HCT116 (cell line): ENCODE measurements at regions of chr5 and their contacts with region 1.

Region 1: GRCh38 chr5:56350598-56351170 is 117.6 kb upstream of the ANKRD55 start:
- DNase-seq: peak; percentile 80
- ATAC-seq: peak; percentile 92
- H3K4me3 ChIP-seq: no peak overlapping the region; a peak in 1 of 4 replicates
- H3K27ac ChIP-seq: peak overlapping the region; percentile 6; the same call in 1 of the 2 replicates
- H3K4me1 ChIP-seq: peaks cover 36 to 43% of the 10 kb centered on the region in 2 experiments
- H3K27me3 ChIP-seq: peaks cover 5% of the 10 kb centered on the region; the same call in 1 of the 2 replicates
- CTCF ChIP-seq: no peak
- POLR2A ChIP-seq: no peak
- RAD21 ChIP-seq: 0 out of 2 replicates have a peak, but pooled peaks have one; percentile 19

Region 2: DNA sequence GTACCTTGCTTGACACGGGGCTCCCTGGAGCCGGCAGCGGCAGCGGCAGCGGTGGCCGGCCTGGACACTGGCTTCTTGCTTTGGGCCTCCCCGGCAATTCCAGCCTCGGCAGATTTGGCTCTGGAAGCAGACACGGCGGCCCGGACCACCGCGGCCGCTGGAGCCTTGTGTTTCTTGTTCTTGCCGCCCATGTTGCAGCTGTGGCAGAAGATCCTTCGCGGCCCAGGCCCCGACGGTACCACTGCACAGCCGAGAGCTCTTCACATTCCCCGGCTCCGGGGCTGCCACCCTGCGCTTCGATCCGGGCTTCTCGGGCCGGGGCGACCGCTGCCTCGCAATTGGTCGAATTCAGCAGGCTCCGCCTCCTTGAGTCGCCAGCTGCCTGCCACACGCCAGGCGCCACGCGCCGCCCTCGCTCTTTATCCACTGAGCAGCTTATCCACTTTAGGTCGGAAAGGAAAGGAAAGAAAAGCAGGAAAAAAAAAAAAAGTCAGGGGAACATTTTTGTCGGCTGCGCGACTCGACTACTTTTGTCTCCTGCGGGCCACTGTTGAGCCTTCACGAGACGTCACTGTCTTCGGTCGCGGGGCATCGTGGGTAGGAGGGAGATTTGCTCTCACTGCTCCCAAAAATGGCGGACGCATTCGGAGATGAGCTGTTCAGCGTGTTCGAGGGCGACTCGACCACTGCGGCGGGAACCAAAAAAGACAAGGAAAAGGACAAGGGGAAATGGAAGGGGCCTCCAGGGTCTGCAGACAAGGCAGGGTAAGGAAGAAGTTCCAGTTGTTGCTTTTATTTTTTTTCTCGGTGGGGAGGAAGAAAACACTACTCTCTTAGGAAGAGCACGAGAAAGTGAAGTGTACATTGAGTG is 1043.1 kb before region 1 on chr5 and contains the starts of genes DHX29 and MTREX:
- CTCF ChIA-PET with region 1: no interaction called
- POLR2A ChIA-PET with region 1: no interaction called
- RAD21 ChIA-PET with region 1: no interaction called
- intact Hi-C with region 1: loop called (anchors 10 kb)
- DNase-seq: peak; percentile 80
- ATAC-seq: peak; percentile 93
- H3K4me3 ChIP-seq: peak within 1 kb of the TSS; percentile 89 to 96
- H3K27ac ChIP-seq: peak within 1 kb of the TSS; percentile 93
- H3K4me1 ChIP-seq: peaks cover 18 to 19% of the 10 kb centered on the region in 2 experiments
- H3K27me3 ChIP-seq: no peaks in the 10 kb centered on the region
- CTCF ChIP-seq: no peak
- POLR2A ChIP-seq: peak; percentile 53
- RAD21 ChIP-seq: no peak
- total RNA-seq, gene DHX29: 24.3 TPM
- total RNA-seq, gene MTREX: 101 TPM

Region 3: DNA sequence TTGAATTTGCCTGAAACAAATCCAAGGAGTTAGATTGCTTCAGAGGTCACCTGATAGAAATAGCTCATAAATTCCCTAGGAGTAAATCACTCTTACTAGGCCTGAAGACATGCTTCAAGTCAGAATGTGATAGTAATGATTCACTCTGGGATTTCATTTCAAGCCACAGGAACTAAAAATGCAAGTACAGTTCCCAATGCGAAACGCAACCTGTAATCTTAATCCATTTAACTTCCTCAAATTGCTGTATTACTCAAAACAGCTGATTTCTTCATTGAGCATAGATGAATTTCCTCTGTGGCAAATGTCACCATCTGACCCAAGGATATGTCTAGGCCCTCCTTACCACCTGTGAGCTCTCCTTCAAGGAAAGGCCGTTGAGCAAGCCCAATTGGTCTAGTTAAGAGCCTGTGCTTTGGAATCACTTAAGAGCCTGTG is 323.8 kb before region 1 on chr5:
- CTCF ChIA-PET with region 1: no interaction called
- POLR2A ChIA-PET with region 1: no interaction called
- RAD21 ChIA-PET with region 1: no interaction called
- intact Hi-C with region 1: no loop called
- DNase-seq: no peak
- ATAC-seq: no peak
- H3K4me3 ChIP-seq: no peak overlapping the region
- H3K27ac ChIP-seq: no peak overlapping the region
- H3K4me1 ChIP-seq: no peaks in the 10 kb centered on the region
- H3K27me3 ChIP-seq: no peaks in the 10 kb centered on the region
- CTCF ChIP-seq: no peak
- POLR2A ChIP-seq: no peak
- RAD21 ChIP-seq: no peak

Region 4: GRCh38 chr5:56360816-56361215 is 10.1 kb after region 1 on chr5:
- CTCF ChIA-PET with region 1: no interaction called
- POLR2A ChIA-PET with region 1: no interaction called
- RAD21 ChIA-PET with region 1: no interaction called
- intact Hi-C with region 1: no loop called
- DNase-seq: no peak
- ATAC-seq: no peak
- H3K4me3 ChIP-seq: no peak overlapping the region
- H3K27ac ChIP-seq: no peak overlapping the region
- H3K4me1 ChIP-seq: peaks cover 24 to 39% of the 10 kb centered on the region in 2 experiments
- H3K27me3 ChIP-seq: no peaks in the 10 kb centered on the region
- CTCF ChIP-seq: no peak
- POLR2A ChIP-seq: no peak
- RAD21 ChIP-seq: no peak

Region 5: DNA sequence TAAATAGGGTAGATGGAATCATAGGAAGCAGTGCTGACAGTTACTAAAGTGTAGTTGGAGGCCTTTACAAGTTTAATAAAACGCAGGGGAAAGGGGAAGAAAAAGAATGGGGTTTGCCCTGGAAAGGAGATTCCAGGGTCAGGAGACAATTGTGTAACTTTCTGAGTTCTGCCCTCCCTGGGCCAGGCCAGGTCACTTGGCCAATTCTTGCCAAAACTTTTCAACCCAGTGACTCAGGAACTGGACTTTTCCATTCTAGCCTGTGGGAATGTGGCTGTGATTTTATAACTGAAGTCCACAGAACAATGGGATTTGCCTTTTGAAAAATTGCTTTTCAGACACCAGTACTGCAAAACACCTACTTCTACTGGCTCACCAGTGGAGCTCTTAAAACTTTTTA is 172.3 kb after region 1 on chr5:
- CTCF ChIA-PET with region 1: no interaction called
- POLR2A ChIA-PET with region 1: no interaction called
- RAD21 ChIA-PET with region 1: no interaction called
- intact Hi-C with region 1: no loop called
- DNase-seq: no peak
- ATAC-seq: no peak
- H3K4me3 ChIP-seq: no peak overlapping the region
- H3K27ac ChIP-seq: no peak overlapping the region
- H3K4me1 ChIP-seq: peaks cover 11 to 16% of the 10 kb centered on the region in 2 experiments; a peak in 3 of 4 replicates
- H3K27me3 ChIP-seq: no peaks in the 10 kb centered on the region
- CTCF ChIP-seq: no peak
- POLR2A ChIP-seq: no peak
- RAD21 ChIP-seq: no peak

Region 6: DNA sequence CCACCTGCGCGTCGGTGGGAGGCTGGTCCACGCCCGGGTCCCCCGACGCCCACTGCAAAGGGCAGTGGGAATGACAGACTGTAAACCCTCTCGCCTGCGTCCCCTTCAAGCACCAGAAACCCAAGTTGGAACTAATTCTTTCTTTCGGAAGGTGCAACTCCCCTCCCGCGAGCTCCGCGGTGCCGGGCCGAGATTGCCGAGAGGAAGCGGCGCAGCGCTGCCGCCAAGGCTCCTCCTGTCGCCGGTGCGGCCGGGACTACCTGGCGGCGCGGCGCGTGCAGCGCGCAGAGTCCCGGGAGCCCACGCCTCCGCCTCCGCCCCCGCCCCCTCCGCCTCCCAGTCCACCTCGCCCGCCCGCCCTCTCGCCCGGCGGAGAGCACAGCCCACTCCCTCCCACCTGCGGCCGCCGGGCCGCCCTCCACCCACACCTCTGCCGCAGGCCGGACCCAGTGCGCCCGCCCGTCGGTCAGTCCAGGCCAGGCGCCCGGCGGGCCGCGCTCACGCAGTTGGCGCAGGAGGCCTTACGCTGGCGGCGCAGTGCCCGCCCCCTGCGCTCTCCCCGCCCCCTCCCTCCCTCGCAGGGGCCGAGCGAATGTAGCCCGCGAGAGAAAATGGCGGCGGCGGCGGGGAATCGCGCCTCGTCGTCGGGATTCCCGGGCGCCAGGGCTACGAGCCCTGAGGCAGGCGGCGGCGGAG is 464.4 kb after region 1 on chr5 and contains the start of gene MAP3K1:
- CTCF ChIA-PET with region 1: no interaction called
- POLR2A ChIA-PET with region 1: no interaction called
- RAD21 ChIA-PET with region 1: no interaction called
- intact Hi-C with region 1: loop called (anchors 5 kb)
- DNase-seq: no peak
- ATAC-seq: peak; percentile 85
- H3K4me3 ChIP-seq: peak within 1 kb of the TSS; percentile 61 to 79
- H3K27ac ChIP-seq: peak within 1 kb of the TSS; percentile 90
- H3K4me1 ChIP-seq: peaks cover 10 to 24% of the 10 kb centered on the region in 2 experiments; a peak in 3 of 4 replicates
- H3K27me3 ChIP-seq: no peaks in the 10 kb centered on the region
- CTCF ChIP-seq: no peak
- POLR2A ChIP-seq: peak; percentile 11
- RAD21 ChIP-seq: peak; percentile 34; the same call in 1 of the 2 replicates
- total RNA-seq, gene MAP3K1: 8.5 TPM